ENCODE measurements at regions of chr5 and their contacts with region 1.

Region 1: GRCh38 chr5:102583276-102584124 is 84.7 kb upstream of the SLCO6A1 start:
- DNase-seq: no peak
- H3K4me3 ChIP-seq: no peak overlapping the region
- H3K27ac ChIP-seq: no peak overlapping the region
- H3K4me1 ChIP-seq: no peaks in the 10 kb centered on the region
- H3K27me3 ChIP-seq: no peaks in the 10 kb centered on the region
- CTCF ChIP-seq: no peak

Region 2: DNA sequence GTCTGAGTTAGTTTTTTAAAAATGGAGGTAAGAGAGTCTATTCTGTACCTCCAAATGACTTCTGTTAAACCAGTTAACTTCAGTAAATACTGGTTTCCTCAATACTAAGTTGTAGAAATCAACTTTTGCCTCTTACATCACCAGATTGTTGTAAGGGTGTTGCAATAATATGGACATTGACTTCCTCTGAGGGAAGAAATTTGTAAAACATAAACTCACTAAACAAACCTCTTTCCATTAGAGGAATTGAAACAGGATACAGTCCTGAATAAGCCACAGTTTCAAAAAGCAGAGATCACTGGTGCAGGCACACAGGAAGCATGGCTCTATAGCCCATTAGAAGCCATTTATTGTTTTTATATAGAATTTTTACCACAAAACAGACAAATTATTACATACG is 52.0 kb before region 1 on chr5:
- intact Hi-C with region 1: no loop called
- DNase-seq: no peak
- H3K4me3 ChIP-seq: no peak overlapping the region
- H3K27ac ChIP-seq: no peak overlapping the region
- H3K4me1 ChIP-seq: no peaks in the 10 kb centered on the region
- H3K27me3 ChIP-seq: no peaks in the 10 kb centered on the region
- CTCF ChIP-seq: no peak

Region 3: DNA sequence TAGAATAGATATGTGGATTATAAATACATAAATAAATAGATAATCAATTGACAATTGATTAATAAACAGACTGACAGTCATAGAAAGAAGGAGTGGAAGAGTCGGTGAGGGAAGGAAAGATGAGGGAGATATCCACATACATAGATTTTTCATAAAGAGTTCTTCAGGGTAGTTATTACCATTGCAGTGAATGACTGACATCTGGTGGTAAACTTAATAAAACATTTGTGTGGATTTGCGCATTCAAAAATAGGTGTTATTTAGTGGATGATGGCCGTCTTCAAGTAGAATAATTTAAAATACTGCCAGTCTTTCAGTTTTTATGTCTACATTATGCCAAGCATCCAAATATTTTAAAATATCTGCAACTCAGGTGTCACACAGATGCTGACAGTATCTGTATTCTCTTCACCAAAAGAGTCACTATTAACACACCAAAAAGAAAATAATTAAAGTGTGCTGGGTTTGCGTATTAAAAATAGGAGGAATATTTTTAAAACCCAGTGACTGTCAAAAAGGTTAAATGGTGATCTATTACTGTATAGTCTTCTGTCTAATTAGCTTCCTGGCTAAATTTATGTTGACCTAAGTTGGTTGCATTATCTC is 457.7 kb after region 1 on chr5:
- intact Hi-C with region 1: loop called (anchors 5 kb)
- DNase-seq: no peak
- H3K4me3 ChIP-seq: no peak overlapping the region
- H3K27ac ChIP-seq: no peak overlapping the region
- H3K4me1 ChIP-seq: no peaks in the 10 kb centered on the region
- H3K27me3 ChIP-seq: no peaks in the 10 kb centered on the region
- CTCF ChIP-seq: peak; percentile 34